Caco-2 (cell line): ENCODE measurements at regions of chr6 and their contacts with region 1.

Region 1: GRCh38 chr6:52664186-52664990 is 6.5 kb upstream of the TMEM14A start:
- DNase-seq: peak; percentile 93 to 96
- H3K4me3 ChIP-seq: peak overlapping the region; percentile 92
- H3K4me3 Mint-ChIP-seq: no peak overlapping the region
- H3K27ac Mint-ChIP-seq: no peak overlapping the region
- H3K4me1 ChIP-seq: no peaks in the 10 kb centered on the region
- H3K4me1 Mint-ChIP-seq: no peaks in the 10 kb centered on the region
- H3K27me3 ChIP-seq: no peaks in the 10 kb centered on the region
- H3K27me3 Mint-ChIP-seq: no peaks in the 10 kb centered on the region
- CTCF ChIP-seq: no peak

Region 2: DNA sequence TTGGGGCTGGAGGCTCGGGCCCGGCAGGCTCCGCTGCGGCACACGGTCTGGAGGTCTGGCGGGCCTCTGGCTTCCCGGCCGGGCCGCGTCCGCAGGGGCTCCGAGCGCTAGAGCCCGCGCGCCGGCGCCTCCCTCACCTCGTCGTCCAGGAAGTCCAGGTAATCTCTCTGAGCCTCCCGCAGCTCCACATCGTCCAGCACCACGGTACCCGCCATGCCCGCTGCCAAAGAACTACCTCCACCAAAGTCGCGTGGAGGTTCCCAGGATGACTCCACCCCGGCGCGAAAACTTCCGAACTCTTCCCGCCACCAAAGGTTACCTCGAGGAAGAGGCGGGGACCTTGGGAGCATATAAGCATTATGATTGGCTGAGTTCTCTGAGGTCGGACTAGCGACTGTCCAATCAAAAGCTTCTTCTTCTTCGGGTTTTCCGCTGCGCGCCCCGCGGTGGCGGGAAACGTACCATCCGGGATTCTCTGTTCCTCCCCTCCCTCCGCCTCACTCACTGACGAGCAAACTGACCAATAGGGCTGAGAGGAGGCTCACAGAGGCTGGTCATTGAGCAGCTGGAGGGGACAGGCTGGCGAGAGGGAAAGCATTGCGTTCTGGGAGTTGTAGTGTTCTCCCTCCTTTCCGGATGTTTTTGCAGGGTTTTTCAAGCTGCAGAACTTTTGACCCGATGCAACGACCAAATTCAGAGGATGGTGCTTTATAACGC is 379.8 kb before region 1 on chr6 and contains the start of gene MCM3:
- CTCF ChIA-PET with region 1: no interaction called
- POLR2A ChIA-PET with region 1: no interaction called
- intact Hi-C with region 1: loop called (anchors 1 kb)
- DNase-seq: peak; percentile 97 to 99
- H3K4me3 ChIP-seq: peak within 1 kb of the TSS; percentile 87
- H3K4me3 Mint-ChIP-seq: no peak within 1 kb of the TSS
- H3K27ac Mint-ChIP-seq: no peak within 1 kb of the TSS
- H3K4me1 ChIP-seq: 0 out of 2 replicates have a peak, but pooled peaks cover 6% of the 10 kb centered on the region
- H3K4me1 Mint-ChIP-seq: no peaks in the 10 kb centered on the region
- H3K27me3 ChIP-seq: no peaks in the 10 kb centered on the region
- H3K27me3 Mint-ChIP-seq: no peaks in the 10 kb centered on the region
- CTCF ChIP-seq: no peak
- total RNA-seq, gene MCM3: 151 and 152 TPM in 2 replicates

Region 3: GRCh38 chr6:52419809-52420670 is 244.3 kb before region 1 on chr6 and contains the start of gene EFHC1:
- CTCF ChIA-PET with region 1: no interaction called
- POLR2A ChIA-PET with region 1: interaction called, 6 read pairs
- intact Hi-C with region 1: loop called (anchors 1 kb)
- DNase-seq: peak; percentile 97 to 98
- H3K4me3 ChIP-seq: peak within 1 kb of the TSS; percentile 69
- H3K4me3 Mint-ChIP-seq: no peak within 1 kb of the TSS
- H3K27ac Mint-ChIP-seq: no peak within 1 kb of the TSS
- H3K4me1 ChIP-seq: peaks cover 32% of the 10 kb centered on the region
- H3K4me1 Mint-ChIP-seq: peaks cover 19% of the 10 kb centered on the region
- H3K27me3 ChIP-seq: no peaks in the 10 kb centered on the region
- H3K27me3 Mint-ChIP-seq: no peaks in the 10 kb centered on the region
- CTCF ChIP-seq: no peak
- total RNA-seq, gene EFHC1: 12.2 and 14.6 TPM in 2 replicates

Region 4: DNA sequence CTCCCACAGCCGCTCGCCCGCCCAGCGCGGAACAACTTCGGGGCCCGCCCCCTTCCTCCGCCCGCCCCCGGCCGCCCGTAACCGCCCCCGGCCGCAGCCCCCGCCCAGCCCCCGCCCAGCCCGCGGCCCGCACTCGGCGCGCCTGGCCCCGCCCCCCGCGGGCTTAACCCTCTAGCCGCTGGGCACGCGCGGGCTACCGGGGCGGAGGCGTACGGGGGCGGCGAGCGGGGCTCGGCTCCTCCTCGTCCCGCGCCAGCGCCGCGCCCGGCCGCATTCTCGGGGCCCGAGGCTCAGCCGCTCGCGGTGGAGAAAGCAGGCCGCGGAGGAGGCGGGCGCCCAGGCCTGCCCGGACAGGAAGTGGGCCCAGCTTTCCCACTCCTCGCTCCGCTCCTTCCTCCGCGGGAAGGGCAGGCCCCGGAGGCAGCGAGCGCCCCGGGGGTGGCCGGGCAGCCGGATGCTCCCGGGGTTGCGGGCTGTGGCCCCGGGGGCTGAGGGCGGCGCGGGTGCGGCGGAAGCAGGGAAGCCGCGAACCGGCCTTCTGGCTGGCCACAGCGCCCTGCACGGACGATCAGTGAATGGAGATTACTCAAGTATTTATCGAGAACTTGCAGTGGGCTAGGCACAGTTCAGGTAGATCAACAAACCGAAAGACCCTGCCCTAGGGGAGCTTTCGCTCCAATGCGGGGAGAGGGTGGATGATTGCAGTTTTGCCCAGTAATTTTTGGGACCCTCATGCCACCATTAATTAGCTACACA is 87.2 kb before region 1 on chr6 and contains the start of gene TRAM2:
- CTCF ChIA-PET with region 1: interaction called, 3 read pairs
- POLR2A ChIA-PET with region 1: no interaction called
- intact Hi-C with region 1: loop called (anchors 2 kb)
- DNase-seq: peak; percentile 87 to 93
- H3K4me3 ChIP-seq: peak within 1 kb of the TSS; percentile 80
- H3K4me3 Mint-ChIP-seq: peak within 1 kb of the TSS; percentile 81
- H3K27ac Mint-ChIP-seq: peak within 1 kb of the TSS; percentile 81
- H3K4me1 ChIP-seq: peaks cover 60% of the 10 kb centered on the region
- H3K4me1 Mint-ChIP-seq: peaks cover 48% of the 10 kb centered on the region
- H3K27me3 ChIP-seq: no peaks in the 10 kb centered on the region
- H3K27me3 Mint-ChIP-seq: no peaks in the 10 kb centered on the region
- CTCF ChIP-seq: no peak
- total RNA-seq, gene TRAM2: 63.8 and 71.6 TPM in 2 replicates

Region 5: GRCh38 chr6:52598123-52598823 is 66.1 kb before region 1 on chr6:
- CTCF ChIA-PET with region 1: no interaction called
- POLR2A ChIA-PET with region 1: no interaction called
- intact Hi-C with region 1: loop called (anchors 2 kb)
- DNase-seq: peak; percentile 83 to 85
- H3K4me3 ChIP-seq: no peak overlapping the region
- H3K4me3 Mint-ChIP-seq: peak overlapping the region; percentile 56
- H3K27ac Mint-ChIP-seq: peak overlapping the region; percentile 80
- H3K4me1 ChIP-seq: peaks cover 18% of the 10 kb centered on the region
- H3K4me1 Mint-ChIP-seq: peaks cover 26% of the 10 kb centered on the region
- H3K27me3 ChIP-seq: no peaks in the 10 kb centered on the region
- H3K27me3 Mint-ChIP-seq: no peaks in the 10 kb centered on the region
- CTCF ChIP-seq: peak; percentile 70 to 81

Region 6: DNA sequence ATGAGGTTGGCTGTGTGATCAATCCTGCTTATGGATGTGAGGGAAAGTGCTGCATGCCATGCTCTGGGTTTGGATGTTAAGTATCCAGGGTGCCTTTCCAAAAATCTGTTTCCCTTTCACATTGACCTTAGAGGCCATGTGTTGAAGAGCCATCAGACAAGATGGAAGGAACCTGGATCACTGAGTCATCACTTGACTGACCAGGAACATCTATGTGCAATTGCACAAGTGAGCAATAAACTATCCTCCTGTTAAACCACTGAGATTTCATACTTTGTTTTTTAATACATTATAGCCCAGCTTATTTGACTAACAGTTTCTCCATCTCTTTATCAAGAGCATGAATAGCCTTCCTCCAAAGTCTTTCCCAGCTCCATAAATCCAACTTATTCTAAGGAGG is 11.2 kb before region 1 on chr6:
- CTCF ChIA-PET with region 1: interaction called, 19 read pairs
- POLR2A ChIA-PET with region 1: no interaction called
- intact Hi-C with region 1: loop called (anchors 1 kb)
- DNase-seq: no peak
- H3K4me3 ChIP-seq: no peak overlapping the region
- H3K4me3 Mint-ChIP-seq: no peak overlapping the region
- H3K27ac Mint-ChIP-seq: no peak overlapping the region
- H3K4me1 ChIP-seq: no peaks in the 10 kb centered on the region
- H3K4me1 Mint-ChIP-seq: peaks cover 7% of the 10 kb centered on the region
- H3K27me3 ChIP-seq: no peaks in the 10 kb centered on the region
- H3K27me3 Mint-ChIP-seq: no peaks in the 10 kb centered on the region
- CTCF ChIP-seq: no peak

Region 7: GRCh38 chr6:52712136-52712535 is 47.7 kb after region 1 on chr6:
- CTCF ChIA-PET with region 1: no interaction called
- POLR2A ChIA-PET with region 1: no interaction called
- intact Hi-C with region 1: no loop called
- DNase-seq: no peak
- H3K4me3 ChIP-seq: no peak overlapping the region
- H3K4me3 Mint-ChIP-seq: no peak overlapping the region
- H3K27ac Mint-ChIP-seq: no peak overlapping the region
- H3K4me1 ChIP-seq: peaks cover 11% of the 10 kb centered on the region; the same call in 1 of the 2 replicates
- H3K4me1 Mint-ChIP-seq: no peaks in the 10 kb centered on the region
- H3K27me3 ChIP-seq: no peaks in the 10 kb centered on the region
- H3K27me3 Mint-ChIP-seq: no peaks in the 10 kb centered on the region
- CTCF ChIP-seq: no peak